Dorsolateral prefrontal cortex (tissue), 120 donors: ENCODE measurements at regions of chr9 and their contacts with region 1.

Region 1: GRCh38 chr9:89489548-89490530 is 8.1 kb downstream of the SEMA4D start:
- DNase-seq: peak in 1 of 10 donors; percentile 12
- H3K4me3 ChIP-seq: peak overlapping the region in 16 of 59 donors; percentile 1 to 39 (median 14)
- H3K27ac ChIP-seq: peak overlapping the region in 57 of 59 donors; percentile 32 to 96 (median 84)
- H3K27me3 ChIP-seq: no peaks in the 10 kb centered on the region
- CTCF ChIP-seq: no peak

Region 2: GRCh38 chr9:89455356-89455824 is 34.4 kb before region 1 on chr9:
- intact Hi-C with region 1: loop called in 1 of 2 experiments (anchors 5 kb)
- DNase-seq: no peak
- H3K4me3 ChIP-seq: no peak overlapping the region
- H3K27ac ChIP-seq: peak overlapping the region in 58 of 59 donors; percentile 33 to 100 (median 97)
- H3K27me3 ChIP-seq: no peaks in the 10 kb centered on the region
- CTCF ChIP-seq: no peak